PC-9 (cell line): ENCODE measurements at regions of chr11 and their contacts with region 1.

Region 1: DNA sequence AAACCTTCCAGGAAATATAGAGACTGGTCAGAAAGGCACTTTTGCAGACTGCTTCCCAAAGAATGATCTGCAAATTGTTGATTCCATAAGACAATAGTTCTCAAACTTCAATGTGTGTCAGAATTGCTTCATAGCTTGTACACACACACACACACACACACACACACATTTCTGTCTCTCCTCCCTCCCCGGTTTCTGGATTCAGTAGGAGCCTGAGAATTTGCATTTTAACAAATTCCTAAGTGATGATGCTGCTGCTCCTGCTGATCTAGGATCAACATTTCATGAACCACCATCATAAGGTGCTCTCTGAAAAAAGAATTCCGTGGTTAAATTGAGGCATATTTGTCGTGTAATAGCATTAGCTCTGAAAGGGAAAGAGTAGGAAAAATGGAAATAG is 35.3 kb upstream of the FZD4 start:
- DNase-seq: peak in 1 of 2 experiments; percentile 46
- H3K4me3 ChIP-seq: no peak overlapping the region
- H3K27ac ChIP-seq: no peak overlapping the region
- H3K4me1 ChIP-seq: peaks cover 16% of the 10 kb centered on the region
- H3K27me3 ChIP-seq: no peaks in the 10 kb centered on the region
- CTCF ChIP-seq: no peak

Region 2: DNA sequence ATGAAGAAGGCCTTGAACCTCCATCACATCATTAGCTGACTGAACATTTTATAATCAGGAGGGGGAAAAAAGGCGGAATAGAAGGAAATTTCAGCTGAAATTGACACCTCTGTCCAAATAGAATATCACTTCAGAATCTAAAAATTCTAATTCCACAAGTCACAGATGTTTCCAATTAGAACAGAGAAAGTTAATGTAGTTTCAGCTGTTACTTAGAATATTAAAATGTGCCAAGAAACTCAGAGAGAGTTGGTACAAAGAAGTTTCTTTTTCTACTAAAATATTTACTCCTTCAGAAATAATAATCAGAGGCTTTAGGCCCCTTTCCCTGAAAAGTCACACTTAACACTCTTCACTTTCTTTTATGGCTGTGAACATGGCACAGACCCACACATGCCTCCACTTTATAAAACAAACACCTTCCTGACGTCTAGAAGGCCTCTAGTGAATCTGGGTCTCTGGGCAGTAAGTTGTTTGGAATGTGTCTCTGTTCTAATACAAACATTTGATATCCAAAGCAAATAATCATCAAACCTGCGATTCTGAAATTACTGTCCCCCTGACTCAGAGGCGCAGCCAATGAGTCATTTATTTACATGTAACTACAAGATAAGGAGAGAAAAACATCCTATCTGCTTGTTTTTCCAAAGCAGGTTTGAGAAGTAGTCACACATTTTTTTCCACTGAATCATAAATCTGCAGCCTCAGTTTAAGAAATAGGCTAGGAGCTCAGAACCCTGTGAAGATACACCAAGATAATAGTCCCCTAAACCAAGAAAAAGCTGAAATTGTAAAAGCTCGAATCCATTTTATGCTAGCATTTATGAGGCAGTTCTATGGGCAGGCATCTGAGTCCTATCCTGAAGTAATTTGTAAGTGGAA is 466.5 kb before region 1 on chr11:
- CTCF ChIA-PET with region 1: no interaction called
- POLR2A ChIA-PET with region 1: no interaction called
- intact Hi-C with region 1: no loop called
- DNase-seq: peak; percentile 62 to 100
- H3K4me3 ChIP-seq: peak overlapping the region; percentile 27; the same call in 1 of the 2 replicates
- H3K27ac ChIP-seq: peak overlapping the region; percentile 94
- H3K4me1 ChIP-seq: peaks cover 37% of the 10 kb centered on the region
- H3K27me3 ChIP-seq: no peaks in the 10 kb centered on the region
- CTCF ChIP-seq: no peak

Region 3: DNA sequence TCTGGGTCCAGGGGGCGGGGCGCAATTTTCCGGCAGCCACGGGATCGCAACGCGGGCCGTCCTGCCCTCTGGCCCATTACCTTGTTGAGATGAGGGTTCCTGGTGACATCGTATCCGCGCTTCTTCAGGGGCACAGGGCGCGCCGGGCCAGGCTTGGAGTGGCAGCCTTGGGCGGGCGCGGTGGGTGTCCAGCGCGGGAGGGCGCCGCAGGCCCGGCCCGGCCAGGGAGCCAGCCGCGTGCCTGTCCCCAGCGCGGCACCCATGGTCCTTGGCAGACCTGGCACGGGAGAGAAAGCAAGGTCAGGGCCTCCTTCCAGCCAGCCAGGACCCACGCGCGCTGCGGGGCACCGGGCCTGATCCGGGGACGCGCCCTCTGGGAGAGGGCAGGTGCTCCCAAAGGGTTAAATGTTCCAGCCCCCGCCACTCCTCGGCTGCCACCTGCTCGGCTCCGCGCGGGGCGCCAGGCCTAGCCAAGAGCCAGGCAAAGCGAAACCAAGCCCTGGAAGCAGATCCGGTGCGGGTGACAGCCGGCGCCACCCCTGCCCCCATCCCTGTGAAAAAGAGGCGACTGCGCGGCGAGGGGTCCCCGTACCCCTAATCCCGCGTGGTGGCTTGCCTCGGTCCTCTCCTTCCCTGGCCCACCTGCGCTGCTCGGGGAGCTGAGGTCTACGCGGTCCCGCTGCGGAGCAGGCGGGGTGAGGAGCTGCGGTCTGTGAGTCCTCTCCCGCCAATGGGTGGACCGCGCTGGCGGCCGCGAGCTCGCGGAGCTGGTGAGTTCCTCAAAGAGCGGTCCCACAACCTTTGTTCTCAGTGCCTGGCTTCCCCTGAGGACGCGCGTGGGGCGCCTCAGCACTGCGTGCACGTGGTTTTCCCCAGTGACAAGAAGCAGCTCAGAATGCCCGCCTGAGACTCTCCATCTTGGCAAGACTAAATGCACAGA is 318.6 kb before region 1 on chr11 and contains the start of gene ME3:
- CTCF ChIA-PET with region 1: no interaction called
- POLR2A ChIA-PET with region 1: no interaction called
- intact Hi-C with region 1: no loop called
- DNase-seq: peak; percentile 63 to 74
- H3K4me3 ChIP-seq: peak within 1 kb of the TSS; percentile 82
- H3K27ac ChIP-seq: peak within 1 kb of the TSS; percentile 87
- H3K4me1 ChIP-seq: peaks cover 52% of the 10 kb centered on the region
- H3K27me3 ChIP-seq: no peaks in the 10 kb centered on the region
- CTCF ChIP-seq: no peak
- total RNA-seq, gene ME3: 34.0 and 61.1 TPM in 2 replicates

Region 4: DNA sequence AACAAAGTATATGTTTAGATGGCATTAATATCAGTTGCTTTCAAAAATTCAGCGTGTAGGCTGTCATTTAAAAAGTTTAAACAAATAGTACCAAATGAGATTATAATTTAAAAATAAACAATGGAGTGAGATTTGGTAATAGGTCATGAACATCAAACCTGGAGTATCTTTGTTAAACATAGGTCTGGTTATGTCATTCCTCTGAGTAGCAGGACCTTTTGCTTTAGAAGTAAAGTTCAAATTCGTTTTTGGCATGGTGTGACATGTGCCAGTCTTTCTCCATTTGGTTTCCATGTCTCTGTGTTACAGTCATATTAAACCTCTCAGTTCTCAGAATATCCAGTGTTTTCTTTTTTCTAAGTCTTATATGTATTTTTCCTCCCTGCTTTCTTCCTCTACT is 289.6 kb after region 1 on chr11:
- CTCF ChIA-PET with region 1: interaction called, 13 read pairs
- POLR2A ChIA-PET with region 1: no interaction called
- intact Hi-C with region 1: no loop called
- DNase-seq: no peak
- H3K4me3 ChIP-seq: no peak overlapping the region
- H3K27ac ChIP-seq: no peak overlapping the region
- H3K4me1 ChIP-seq: no peaks in the 10 kb centered on the region
- H3K27me3 ChIP-seq: no peaks in the 10 kb centered on the region
- CTCF ChIP-seq: no peak

Region 5: GRCh38 chr11:87307101-87307500 is 316.6 kb after region 1 on chr11:
- CTCF ChIA-PET with region 1: no interaction called
- POLR2A ChIA-PET with region 1: no interaction called
- intact Hi-C with region 1: no loop called
- DNase-seq: no peak
- H3K4me3 ChIP-seq: no peak overlapping the region
- H3K27ac ChIP-seq: no peak overlapping the region
- H3K4me1 ChIP-seq: no peaks in the 10 kb centered on the region
- H3K27me3 ChIP-seq: no peaks in the 10 kb centered on the region
- CTCF ChIP-seq: no peak